ENCODE measurements at regions of chr1 and their contacts with region 1.

Region 1: GRCh38 chr1:241356519-241357365 is at the start of gene RGS7:
- DNase-seq: peak; percentile 60
- ATAC-seq: peak; percentile 64
- total RNA-seq, gene RGS7: 2.0 TPM

Region 2: GRCh38 chr1:241376701-241377100 is 20.0 kb after region 1 on chr1:
- intact Hi-C with region 1: loop called (anchors 1 kb)
- DNase-seq: no peak
- ATAC-seq: no peak

Region 3: DNA sequence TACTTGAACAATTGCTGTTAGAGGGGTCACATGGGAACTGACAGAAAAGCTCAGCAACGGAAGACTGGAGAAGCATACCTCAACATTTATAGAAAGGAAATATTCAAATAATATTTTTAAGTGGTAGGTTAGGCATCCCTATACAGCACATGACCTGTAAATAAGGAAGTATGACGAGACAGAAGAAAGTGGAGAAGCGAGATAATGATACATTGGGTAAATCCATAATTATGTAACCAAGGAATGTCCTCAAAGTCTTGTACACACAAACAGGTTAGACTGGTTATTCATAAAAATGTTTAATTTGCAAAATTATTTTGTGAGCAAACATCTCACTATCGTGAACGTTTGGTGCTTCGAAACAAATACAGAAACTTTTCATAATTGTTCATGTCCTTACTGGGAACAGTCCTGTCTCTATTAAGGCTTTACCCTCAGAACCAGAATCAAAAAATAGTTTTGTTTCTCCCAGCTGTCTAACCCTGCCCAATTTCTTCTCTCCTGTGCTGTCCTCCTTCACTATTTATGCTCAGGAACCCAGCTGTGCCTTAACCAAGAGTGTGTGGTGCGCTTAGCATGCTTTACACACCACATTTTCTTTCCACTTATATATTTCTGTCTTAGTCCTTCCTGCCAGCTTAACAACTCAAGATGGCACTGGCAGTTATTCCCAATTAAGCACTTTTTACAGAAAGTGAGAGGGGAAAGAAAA is 185.6 kb after region 1 on chr1:
- intact Hi-C with region 1: no loop called
- DNase-seq: no peak
- ATAC-seq: no peak